Lower leg skin (tissue), 4 donors: ENCODE measurements at regions of chr2 and their contacts with region 1.

Region 1: DNA sequence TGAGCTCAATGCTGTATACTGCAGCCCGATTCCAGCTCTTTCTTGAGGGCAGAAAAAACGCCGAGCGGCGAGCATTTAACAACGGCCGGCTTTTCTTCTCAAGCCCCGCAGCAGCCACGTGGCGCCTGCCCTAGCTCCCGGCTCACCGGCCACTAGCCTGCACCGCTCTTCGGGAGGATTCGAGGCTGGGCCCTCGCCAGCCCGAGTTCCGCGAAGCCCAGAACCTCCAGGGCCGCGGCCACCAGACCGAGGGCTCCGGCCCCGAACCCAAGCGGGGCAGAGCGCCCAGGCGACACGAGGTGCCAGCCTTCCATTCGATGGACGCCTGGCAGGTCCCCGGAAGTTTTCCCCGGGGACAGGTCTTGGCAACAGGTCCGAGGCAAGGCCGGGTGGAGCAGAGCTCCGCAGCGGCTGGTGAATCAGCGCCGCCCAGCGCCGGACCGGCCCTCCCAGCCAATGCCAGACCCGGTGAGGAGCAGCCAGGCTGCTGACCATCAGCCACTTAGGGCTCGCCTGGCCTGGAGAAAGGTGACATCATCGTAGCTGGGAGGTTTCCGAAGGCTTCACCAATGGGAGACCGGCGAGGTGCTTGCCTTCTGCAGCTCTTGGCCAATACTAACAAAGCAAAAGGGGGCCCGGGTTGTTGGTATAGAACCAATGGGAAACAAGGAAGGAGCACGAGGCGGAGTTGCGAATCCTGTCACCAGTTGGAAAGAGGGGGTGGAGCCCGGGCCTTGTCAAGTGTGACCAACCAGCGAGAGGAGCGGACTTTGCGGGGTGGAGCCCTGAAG is 544 bp upstream of the MXD1 start:
- DNase-seq: peak; percentile 100
- H3K4me3 ChIP-seq: peak overlapping the region; percentile 37
- CTCF ChIP-seq: peak in 1 of 3 donors; percentile 53
- POLR2A ChIP-seq: peak in 1 of 2 donors; percentile 75

Region 2: DNA sequence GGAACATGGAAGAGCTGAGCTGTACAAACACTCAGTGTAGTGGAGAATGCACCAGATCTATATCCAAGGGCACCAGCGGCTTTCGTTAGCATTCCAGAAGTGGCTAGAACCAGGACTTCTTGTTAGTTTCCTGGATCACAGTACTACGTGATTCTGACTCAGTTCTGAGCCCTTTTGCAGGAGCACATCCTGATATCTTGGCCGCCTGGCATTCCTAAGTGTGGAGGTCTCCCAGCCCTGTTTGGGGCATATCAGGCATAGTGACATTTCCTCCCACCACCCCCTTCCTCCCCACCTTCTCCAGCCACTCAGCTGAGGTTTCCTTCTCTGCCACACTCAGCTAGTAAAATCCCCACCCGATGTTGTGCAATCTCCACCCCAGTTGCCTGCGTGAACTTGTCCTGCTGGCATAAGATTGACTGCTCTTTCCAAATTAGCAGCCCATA is 1106.5 kb before region 1 on chr2:
- intact Hi-C with region 1: no loop called
- DNase-seq: peak; percentile 77 to 91
- H3K4me3 ChIP-seq: no peak overlapping the region
- CTCF ChIP-seq: no peak
- POLR2A ChIP-seq: no peak

Region 3: GRCh38 chr2:69816923-69817542 is 97.3 kb before region 1 on chr2:
- intact Hi-C with region 1: no loop called
- DNase-seq: peak; percentile 92
- H3K4me3 ChIP-seq: no peak overlapping the region
- CTCF ChIP-seq: peak in 1 of 3 donors; percentile 96
- POLR2A ChIP-seq: no peak

Region 4: DNA sequence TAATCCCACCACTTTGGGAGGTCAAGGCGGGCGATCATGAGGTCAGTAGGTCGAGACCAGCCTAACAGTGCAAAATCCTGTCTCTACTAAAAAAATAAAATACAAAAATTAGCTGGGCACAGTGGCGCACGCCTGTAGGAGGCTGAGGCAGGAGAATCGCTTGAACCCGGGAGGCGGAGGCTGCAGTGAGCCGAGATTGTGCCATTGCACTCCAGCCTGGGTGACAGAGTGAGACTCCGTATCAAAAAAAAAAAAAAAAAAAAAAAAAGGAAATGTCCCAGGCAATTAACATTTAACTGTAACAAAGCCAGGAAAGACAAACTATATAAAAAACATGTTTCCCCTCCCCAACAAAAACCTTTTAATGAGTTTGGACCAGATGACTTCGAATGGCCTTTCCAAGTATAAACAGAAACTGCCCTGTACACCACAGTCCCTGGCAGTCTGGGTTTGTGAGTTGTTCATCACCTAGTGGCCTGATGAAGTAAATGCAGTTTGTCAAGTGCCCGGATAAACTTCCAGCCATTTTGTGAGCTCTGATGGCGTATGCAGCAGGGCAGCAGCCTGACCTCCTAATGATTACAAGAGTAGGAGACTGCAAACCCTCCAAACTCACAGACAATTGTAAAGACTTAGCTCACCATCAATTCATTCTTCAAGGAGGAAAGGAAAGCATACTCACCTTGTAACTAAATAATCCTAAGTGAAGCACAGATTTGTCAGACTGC is 156.3 kb after region 1 on chr2:
- intact Hi-C with region 1: loop called (anchors 5 kb)
- DNase-seq: peak in 1 of 2 donors; percentile 75
- H3K4me3 ChIP-seq: no peak overlapping the region
- CTCF ChIP-seq: peak in 1 of 3 donors; percentile 56
- POLR2A ChIP-seq: no peak

Region 5: GRCh38 chr2:70142590-70143313 is 228.4 kb after region 1 on chr2:
- intact Hi-C with region 1: loop called (anchors 2 kb)
- DNase-seq: peak; percentile 99 to 100
- H3K4me3 ChIP-seq: no peak overlapping the region
- CTCF ChIP-seq: peak in 2 of 3 donors; percentile 87 to 99
- POLR2A ChIP-seq: peak in 1 of 2 donors; percentile 78